Naive thymus-derived CD4-positive, alpha-beta T cell (primary cell): ENCODE measurements at regions of chr6 and their contacts with region 1.

Region 1: GRCh38 chr6:52233975-52234823 is 10.1 kb downstream of the IL17F start:
- DNase-seq: no peak
- ATAC-seq: no peak
- H3K4me3 ChIP-seq: no peak overlapping the region
- H3K4me3 Mint-ChIP-seq: no peak overlapping the region
- H3K27ac ChIP-seq: no peak overlapping the region
- H3K27ac Mint-ChIP-seq: no peak overlapping the region
- H3K4me1 ChIP-seq: peaks cover 0 to 4% of the 10 kb centered on the region in 2 donors
- H3K4me1 Mint-ChIP-seq: peaks cover 0 to 25% (median 0%) of the 10 kb centered on the region in 7 donors
- H3K27me3 ChIP-seq: peaks cover 0 to 4% of the 10 kb centered on the region in 2 donors
- H3K27me3 Mint-ChIP-seq: peaks cover 8 to 74% (median 11%) of the 10 kb centered on the region in 5 donors

Region 2: GRCh38 chr6:52213127-52213526 is 21.1 kb before region 1 on chr6:
- CTCF ChIA-PET with region 1: interaction called, 3 read pairs
- POLR2A ChIA-PET with region 1: no interaction called
- intact Hi-C with region 1: loop called in 1 of 2 experiments (anchors 1 kb)
- DNase-seq: peak in 5 of 9 donors; percentile 2 to 17 (median 9)
- ATAC-seq: no peak
- H3K4me3 ChIP-seq: no peak overlapping the region
- H3K4me3 Mint-ChIP-seq: no peak overlapping the region
- H3K27ac ChIP-seq: no peak overlapping the region
- H3K27ac Mint-ChIP-seq: no peak overlapping the region
- H3K4me1 ChIP-seq: no peaks in the 10 kb centered on the region
- H3K4me1 Mint-ChIP-seq: peaks cover 1 to 11% (median 11%) of the 10 kb centered on the region in 7 donors
- H3K27me3 ChIP-seq: no peaks in the 10 kb centered on the region
- H3K27me3 Mint-ChIP-seq: peaks cover 0 to 35% (median 10%) of the 10 kb centered on the region in 5 donors